Caco-2 (cell line): ENCODE measurements at regions of chr1 and their contacts with region 1.

Region 1: DNA sequence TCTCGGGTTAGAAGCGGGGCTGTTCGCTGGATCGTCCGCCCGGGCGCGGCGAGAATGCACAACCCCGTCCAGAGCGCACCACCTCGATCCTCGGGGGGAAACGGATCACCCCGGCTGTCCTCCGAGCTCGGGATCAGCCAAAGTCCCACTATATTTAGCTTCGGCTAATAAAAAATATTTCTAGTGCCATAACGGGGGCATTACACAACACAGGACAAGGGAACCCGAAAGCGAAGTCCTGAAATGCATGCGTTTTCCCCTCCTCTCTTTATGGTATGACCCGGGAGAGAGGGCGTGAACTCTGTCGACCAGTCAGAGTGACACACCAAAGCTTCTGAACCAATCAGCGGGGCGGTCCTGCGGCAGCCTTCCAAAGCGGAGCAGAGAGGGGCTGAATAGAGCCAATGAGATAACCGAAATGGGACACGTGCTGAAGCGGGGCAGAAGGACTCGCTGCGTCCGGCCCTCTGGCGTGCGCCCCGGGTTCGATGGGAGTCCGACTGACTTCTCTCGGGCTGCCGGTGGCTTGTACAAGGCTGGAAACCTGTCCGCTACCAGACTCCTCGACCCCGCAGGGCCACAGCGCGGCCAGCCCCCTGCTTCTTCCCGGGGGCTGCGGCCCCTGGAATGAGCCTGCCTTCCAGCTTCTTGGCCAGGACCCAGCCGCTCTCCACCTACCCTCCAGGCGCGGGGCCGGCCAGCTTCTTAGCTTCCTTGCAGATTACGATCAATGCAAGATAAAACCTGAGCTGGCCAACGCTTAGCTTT is at the start of gene ALDH4A1:
- DNase-seq: peak; percentile 95 to 98
- H3K4me3 ChIP-seq: peak within 1 kb of the TSS; percentile 86
- H3K4me3 Mint-ChIP-seq: peak within 1 kb of the TSS; percentile 99
- H3K27ac Mint-ChIP-seq: peak within 1 kb of the TSS; percentile 98
- H3K4me1 ChIP-seq: peaks cover 6% of the 10 kb centered on the region
- H3K4me1 Mint-ChIP-seq: no peaks in the 10 kb centered on the region
- H3K27me3 ChIP-seq: no peaks in the 10 kb centered on the region
- H3K27me3 Mint-ChIP-seq: no peaks in the 10 kb centered on the region
- CTCF ChIP-seq: no peak
- total RNA-seq, gene ALDH4A1: 15.3 and 18.0 TPM in 2 replicates

Region 2: DNA sequence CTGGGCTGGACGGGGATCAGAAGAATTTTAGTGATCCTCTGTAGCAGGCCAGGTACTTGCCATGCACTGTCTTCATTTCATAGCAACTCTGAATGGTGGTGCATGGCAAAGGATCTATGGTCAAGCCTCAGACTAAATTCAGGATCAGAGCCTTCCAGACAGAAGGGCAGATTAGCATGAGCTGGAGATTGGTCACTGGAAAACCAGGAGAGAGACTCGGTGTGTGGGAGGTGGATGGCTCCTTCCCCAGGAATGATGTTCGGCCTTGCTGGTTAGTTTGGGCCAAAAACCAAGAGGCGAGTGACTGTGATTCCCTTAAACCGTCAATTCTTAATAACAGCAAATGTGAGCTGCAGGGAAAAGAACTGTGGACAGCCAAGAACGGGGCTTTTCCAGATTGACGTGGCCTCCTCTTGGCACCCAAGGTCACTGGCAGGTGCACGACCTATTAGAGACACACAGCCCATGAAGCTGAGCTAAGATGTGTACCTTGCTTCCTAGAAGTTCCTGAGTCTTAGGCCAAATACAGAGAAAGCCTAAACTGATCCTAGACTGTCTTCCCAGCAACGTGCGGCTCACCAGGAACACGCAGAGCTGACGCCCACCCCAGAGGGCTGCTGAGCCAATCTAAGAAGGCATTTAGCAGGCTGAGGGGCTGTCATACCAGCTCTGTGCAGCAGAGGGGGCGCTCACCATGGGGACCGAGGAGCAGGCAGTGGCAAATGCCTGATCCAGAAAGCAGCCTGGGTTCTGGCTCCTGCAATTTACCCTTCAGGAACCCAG is 18.9 kb before region 1 on chr1:
- CTCF ChIA-PET with region 1: interaction called, 11 read pairs
- POLR2A ChIA-PET with region 1: no interaction called
- intact Hi-C with region 1: loop called (anchors 2 kb)
- DNase-seq: peak; percentile 64 to 79
- H3K4me3 ChIP-seq: no peak overlapping the region
- H3K4me3 Mint-ChIP-seq: no peak overlapping the region
- H3K27ac Mint-ChIP-seq: no peak overlapping the region
- H3K4me1 ChIP-seq: no peaks in the 10 kb centered on the region
- H3K4me1 Mint-ChIP-seq: no peaks in the 10 kb centered on the region
- H3K27me3 ChIP-seq: no peaks in the 10 kb centered on the region
- H3K27me3 Mint-ChIP-seq: no peaks in the 10 kb centered on the region
- CTCF ChIP-seq: peak; percentile 81 to 86

Region 3: GRCh38 chr1:18956369-18957135 is 53.8 kb after region 1 on chr1 and contains the start of gene IFFO2:
- CTCF ChIA-PET with region 1: interaction called, 6 read pairs
- POLR2A ChIA-PET with region 1: no interaction called
- intact Hi-C with region 1: loop called (anchors 5 kb)
- DNase-seq: peak; percentile 93 to 96
- H3K4me3 ChIP-seq: peak within 1 kb of the TSS; percentile 90
- H3K4me3 Mint-ChIP-seq: peak within 1 kb of the TSS; percentile 79
- H3K27ac Mint-ChIP-seq: no peak within 1 kb of the TSS
- H3K4me1 ChIP-seq: 0 out of 2 replicates have a peak, but pooled peaks cover 9% of the 10 kb centered on the region
- H3K4me1 Mint-ChIP-seq: peaks cover 5% of the 10 kb centered on the region
- H3K27me3 ChIP-seq: no peaks in the 10 kb centered on the region
- H3K27me3 Mint-ChIP-seq: no peaks in the 10 kb centered on the region
- CTCF ChIP-seq: no peak
- total RNA-seq, gene IFFO2: 18.7 and 23.7 TPM in 2 replicates

Region 4: DNA sequence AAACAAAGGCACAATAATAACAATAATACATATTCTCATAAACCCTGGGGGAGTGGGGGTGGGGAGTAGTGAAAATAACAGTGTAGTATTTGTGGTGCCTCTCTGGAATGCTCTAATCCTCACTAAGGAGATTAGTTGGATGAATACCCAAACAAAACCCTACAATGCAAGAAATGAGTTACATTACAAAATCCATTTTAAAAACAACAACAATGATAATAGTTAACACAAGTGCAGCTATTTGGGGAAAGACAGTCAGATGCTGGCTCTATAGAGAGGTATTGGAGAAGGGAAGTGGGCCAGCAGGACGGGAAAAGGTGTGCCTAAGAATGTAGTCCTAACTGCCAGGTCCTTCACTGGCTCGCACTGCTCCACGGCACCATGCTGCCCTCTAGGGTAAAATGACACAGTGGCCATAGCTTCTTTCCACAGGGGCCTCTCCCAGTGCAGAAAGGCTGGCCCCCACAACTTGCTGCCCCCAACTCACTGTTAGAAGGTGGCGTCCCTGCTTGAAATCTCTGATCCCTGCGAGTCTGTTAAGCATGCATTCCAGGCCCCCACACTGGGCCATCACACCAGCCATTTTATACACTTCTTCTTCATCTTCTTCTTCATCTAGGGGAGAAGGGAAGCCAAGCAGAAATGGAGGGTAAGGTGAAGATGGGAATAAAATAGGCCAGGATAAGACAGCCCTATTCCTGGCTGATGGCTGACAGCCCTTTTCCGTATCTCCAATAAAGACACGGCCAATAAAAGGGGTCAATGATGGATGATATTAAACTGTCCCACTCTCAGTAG is 193.5 kb after region 1 on chr1:
- CTCF ChIA-PET with region 1: interaction called, 3 read pairs
- POLR2A ChIA-PET with region 1: no interaction called
- intact Hi-C with region 1: loop called (anchors 5 kb)
- DNase-seq: peak in 1 of 2 experiments; percentile 53
- H3K4me3 ChIP-seq: no peak overlapping the region
- H3K4me3 Mint-ChIP-seq: no peak overlapping the region
- H3K27ac Mint-ChIP-seq: no peak overlapping the region
- H3K4me1 ChIP-seq: no peaks in the 10 kb centered on the region
- H3K4me1 Mint-ChIP-seq: no peaks in the 10 kb centered on the region
- H3K27me3 ChIP-seq: no peaks in the 10 kb centered on the region
- H3K27me3 Mint-ChIP-seq: no peaks in the 10 kb centered on the region
- CTCF ChIP-seq: peak in 1 of 2 experiments; percentile 56

Region 5: DNA sequence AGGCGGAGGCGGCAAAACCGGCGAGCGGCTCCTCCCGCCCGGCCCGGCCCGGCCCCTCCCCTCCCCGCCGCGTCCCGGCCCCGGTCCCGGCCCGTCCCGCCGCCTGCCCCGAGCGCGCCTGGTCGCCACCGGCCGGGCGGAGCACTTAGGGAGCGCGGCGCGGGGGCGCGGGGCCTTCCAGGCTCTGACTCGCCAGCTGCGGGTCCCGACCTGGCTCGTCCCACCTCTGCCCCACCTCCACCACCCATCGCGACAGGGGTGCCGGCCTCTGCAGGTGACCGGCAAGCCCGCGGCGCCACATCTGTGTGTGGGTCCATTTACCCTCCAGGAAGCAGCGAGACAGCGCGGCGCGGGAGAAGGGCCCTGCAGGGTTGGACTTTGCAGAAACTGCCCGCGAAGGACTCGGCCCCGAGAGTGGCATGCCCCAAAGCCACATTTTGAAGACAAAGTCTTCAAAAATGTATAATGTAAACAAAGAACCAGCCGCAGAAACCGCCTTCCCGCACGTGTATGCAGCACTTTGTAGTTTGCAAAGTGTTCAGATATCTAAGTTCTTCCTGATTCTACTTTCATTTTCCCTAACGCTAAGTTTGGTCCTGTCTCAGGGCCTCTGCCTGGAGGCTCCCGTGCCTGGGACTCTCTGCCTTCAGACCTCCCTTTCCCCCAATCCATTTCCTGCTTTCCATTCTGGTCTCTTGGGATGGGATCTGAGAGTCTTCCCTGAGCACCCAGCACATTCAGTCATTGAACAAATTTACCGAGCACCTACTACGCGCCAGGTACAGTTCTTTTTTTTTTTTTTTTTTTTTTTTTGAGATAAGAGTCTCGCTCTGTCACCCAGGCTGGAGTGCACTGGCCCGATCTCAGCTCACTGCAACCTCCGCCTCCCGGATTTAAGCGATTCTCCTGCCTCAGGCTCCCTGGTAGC is 897.4 kb after region 1 on chr1 and contains the start of gene TMCO4:
- CTCF ChIA-PET with region 1: no interaction called
- POLR2A ChIA-PET with region 1: interaction called, 18 read pairs
- intact Hi-C with region 1: no loop called
- DNase-seq: peak; percentile 64
- H3K4me3 ChIP-seq: peak within 1 kb of the TSS; percentile 62
- H3K4me3 Mint-ChIP-seq: peak within 1 kb of the TSS; percentile 85
- H3K27ac Mint-ChIP-seq: peak within 1 kb of the TSS; percentile 81
- H3K4me1 ChIP-seq: 0 out of 2 replicates have a peak, but pooled peaks cover 5% of the 10 kb centered on the region
- H3K4me1 Mint-ChIP-seq: peaks cover 6% of the 10 kb centered on the region
- H3K27me3 ChIP-seq: no peaks in the 10 kb centered on the region
- H3K27me3 Mint-ChIP-seq: no peaks in the 10 kb centered on the region
- CTCF ChIP-seq: no peak
- total RNA-seq, gene TMCO4: 12.1 and 15.1 TPM in 2 replicates